ENCODE measurements at regions of chr11 and their contacts with region 1.

Region 1: GRCh38 chr11:6612213-6613041 is at the start of gene TAF10:
- DNase-seq: peak; percentile 97
- H3K4me3 Mint-ChIP-seq: no peak within 1 kb of the TSS
- H3K27ac Mint-ChIP-seq: peak within 1 kb of the TSS; percentile 81
- H3K4me1 Mint-ChIP-seq: peaks cover 21% of the 10 kb centered on the region
- H3K27me3 Mint-ChIP-seq: no peaks in the 10 kb centered on the region
- CTCF ChIP-seq: peak; percentile 26
- total RNA-seq, gene TAF10: 175 and 187 TPM in 2 replicates

Region 2: GRCh38 chr11:6481012-6481923 is 131.2 kb before region 1 on chr11 and contains the starts of genes ARFIP2 and TIMM10B:
- CTCF ChIA-PET with region 1: no interaction called
- intact Hi-C with region 1: loop called (anchors 10 kb)
- DNase-seq: peak; percentile 96
- H3K4me3 Mint-ChIP-seq: peak within 1 kb of the TSS; percentile 97
- H3K27ac Mint-ChIP-seq: peak within 1 kb of the TSS; percentile 92
- H3K4me1 Mint-ChIP-seq: peaks cover 27% of the 10 kb centered on the region
- H3K27me3 Mint-ChIP-seq: no peaks in the 10 kb centered on the region
- CTCF ChIP-seq: no peak
- total RNA-seq, gene ARFIP2: 72.2 and 74.9 TPM in 2 replicates
- total RNA-seq, gene TIMM10B: 41.7 and 45.7 TPM in 2 replicates

Region 3: GRCh38 chr11:6646918-6647679 is 34.7 kb after region 1 on chr11:
- CTCF ChIA-PET with region 1: no interaction called
- intact Hi-C with region 1: no loop called
- DNase-seq: no peak
- H3K4me3 Mint-ChIP-seq: no peak overlapping the region
- H3K27ac Mint-ChIP-seq: no peak overlapping the region
- H3K4me1 Mint-ChIP-seq: no peaks in the 10 kb centered on the region
- H3K27me3 Mint-ChIP-seq: no peaks in the 10 kb centered on the region
- CTCF ChIP-seq: no peak

Region 4: GRCh38 chr11:6719576-6719975 is 107.1 kb after region 1 on chr11:
- CTCF ChIA-PET with region 1: no interaction called
- intact Hi-C with region 1: no loop called
- DNase-seq: no peak
- H3K4me3 Mint-ChIP-seq: no peak overlapping the region
- H3K27ac Mint-ChIP-seq: no peak overlapping the region
- H3K4me1 Mint-ChIP-seq: no peaks in the 10 kb centered on the region
- H3K27me3 Mint-ChIP-seq: peaks cover 92% of the 10 kb centered on the region
- CTCF ChIP-seq: no peak

Measured in Calu3 (cell line).